OCI-LY7 (cell line): ENCODE measurements at regions of chr16 and their contacts with region 1.

Region 1: DNA sequence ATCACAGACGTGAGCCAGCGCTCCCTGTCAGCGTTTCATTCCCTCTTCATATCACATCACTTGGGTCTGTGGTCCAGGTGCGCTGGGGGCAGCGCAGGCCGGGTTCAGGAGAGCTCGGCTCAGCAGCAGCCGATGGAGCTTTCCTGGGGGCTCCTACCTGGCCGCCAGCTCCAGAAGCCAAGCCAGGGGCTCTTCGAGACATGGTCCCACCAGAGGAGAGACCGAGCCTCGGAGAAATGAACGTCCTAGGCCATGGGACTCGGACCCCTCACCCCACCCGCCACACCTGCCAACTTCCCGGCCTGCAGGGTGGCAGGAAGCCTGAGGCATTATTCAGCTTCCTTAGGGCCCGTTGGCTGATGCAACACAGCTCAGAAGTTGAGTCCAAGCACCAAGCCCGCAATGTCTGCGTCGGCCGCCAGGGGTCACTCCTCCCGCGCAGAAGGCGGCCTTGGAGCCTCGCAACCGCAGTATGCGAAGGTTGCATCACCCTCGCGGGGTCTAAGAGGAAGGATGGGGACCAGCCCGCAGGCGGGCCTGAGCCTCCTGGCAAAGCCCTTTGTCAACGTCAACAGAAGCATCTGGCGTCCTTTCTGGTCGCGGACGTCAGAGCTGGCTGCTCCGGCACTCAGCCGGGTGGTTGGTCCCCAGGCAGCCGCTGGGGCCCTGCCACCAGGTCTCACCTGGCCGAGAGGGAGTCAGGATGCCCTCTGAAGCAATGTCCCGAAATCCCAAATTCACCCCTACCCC is 13.2 kb upstream of the KLHDC4 start:
- DNase-seq: peak; percentile 100
- H3K4me3 ChIP-seq: peak overlapping the region; percentile 71
- H3K27ac ChIP-seq: peak overlapping the region; percentile 98
- H3K4me1 ChIP-seq: peaks cover 88% of the 10 kb centered on the region
- CTCF ChIP-seq: peak; percentile 81

Region 2: GRCh38 chr16:87387942-87388817 is 390.8 kb before region 1 on chr16:
- CTCF ChIA-PET with region 1: no interaction called
- POLR2A ChIA-PET with region 1: no interaction called
- intact Hi-C with region 1: loop called (anchors 10 kb)
- DNase-seq: peak; percentile 97
- H3K4me3 ChIP-seq: peak overlapping the region; percentile 51
- H3K27ac ChIP-seq: peak overlapping the region; percentile 85
- H3K4me1 ChIP-seq: peaks cover 44% of the 10 kb centered on the region
- CTCF ChIP-seq: no peak

Region 3: DNA sequence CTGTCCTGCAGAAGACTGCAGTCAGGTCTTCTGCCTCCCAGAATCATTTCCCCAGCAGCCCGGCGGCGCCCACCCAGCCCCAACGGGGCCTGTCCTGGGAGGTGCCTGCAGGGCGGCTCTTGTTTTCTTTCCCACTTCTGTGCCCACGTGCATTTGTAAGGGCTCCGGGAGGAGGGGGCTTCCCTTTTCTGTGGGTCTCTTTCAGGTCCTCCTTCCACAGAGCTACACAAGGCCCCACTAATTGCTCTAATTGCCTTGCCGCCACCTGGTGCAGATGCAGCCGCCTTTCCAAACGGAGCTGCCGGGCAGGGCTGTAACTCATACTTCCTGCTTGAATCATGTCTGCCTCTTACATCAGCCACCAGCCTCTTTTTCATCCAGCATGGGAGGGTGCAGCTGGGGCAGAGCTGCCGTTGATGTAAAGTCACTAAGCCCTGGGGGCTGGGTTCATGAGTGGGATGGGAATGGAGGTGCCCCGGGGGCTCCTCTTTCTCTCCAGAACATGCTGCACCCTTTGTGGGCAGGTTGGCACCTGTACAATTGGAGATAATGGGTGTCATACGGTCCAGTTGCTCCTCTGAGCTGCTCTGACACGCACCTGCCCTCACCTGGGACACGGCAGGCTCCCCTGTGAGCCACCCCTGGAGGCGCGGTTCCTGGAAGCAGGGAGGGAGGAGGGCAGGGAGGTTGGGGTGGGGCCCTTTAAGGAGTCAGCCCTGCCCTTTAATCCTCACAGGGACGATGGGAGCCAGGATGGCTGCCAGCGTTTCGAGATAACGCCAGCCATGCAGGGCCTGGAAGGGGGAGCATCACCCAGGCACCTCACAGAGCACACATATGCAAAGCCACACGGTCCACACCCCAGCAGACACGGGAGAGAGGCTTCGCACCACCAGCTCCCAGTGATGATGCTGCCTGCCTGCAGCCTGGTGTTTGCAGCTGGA is 27.9 kb after region 1 on chr16:
- CTCF ChIA-PET with region 1: interaction called, 19 read pairs
- POLR2A ChIA-PET with region 1: interaction called, 128 read pairs
- intact Hi-C with region 1: loop called (anchors 1 kb)
- DNase-seq: peak; percentile 95
- H3K4me3 ChIP-seq: peak overlapping the region; percentile 65
- H3K27ac ChIP-seq: peak overlapping the region; percentile 97
- H3K4me1 ChIP-seq: peaks cover 91% of the 10 kb centered on the region
- CTCF ChIP-seq: 0 out of 2 replicates have a peak, but pooled peaks have one; percentile 24

Region 4: DNA sequence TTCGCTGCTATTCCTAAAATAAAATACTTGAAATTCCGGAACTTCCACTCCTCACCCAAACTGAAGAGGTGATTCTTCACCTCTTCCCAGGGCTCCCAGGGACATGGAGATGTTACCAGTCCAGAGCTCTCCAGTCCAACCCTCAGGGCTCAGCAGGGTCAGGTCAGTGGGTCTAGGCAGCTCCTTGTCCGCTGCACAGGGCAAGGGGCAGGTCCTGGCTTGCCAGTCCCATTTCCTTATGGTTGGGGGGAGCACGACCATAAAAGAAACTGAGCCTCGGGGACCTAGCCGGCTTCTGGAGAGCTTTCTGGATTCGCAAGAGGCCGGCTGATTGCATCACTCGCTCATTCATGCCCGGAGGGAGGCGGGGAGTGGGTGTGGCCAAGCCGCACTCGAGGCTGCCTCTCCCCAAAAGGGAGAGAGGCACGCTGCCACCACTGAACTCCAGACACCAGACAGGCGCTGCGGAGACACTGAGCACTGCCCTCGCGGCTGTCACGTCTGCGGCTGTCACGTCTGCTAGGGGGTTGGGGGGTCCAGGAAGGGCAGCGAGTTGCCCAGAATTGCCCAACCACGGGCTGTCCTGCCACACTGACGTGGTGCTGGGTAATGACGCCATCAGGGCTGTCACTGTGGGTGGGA is 74.5 kb after region 1 on chr16:
- CTCF ChIA-PET with region 1: interaction called, 18 read pairs
- POLR2A ChIA-PET with region 1: interaction called, 34 read pairs
- intact Hi-C with region 1: loop called (anchors 1 kb)
- DNase-seq: peak; percentile 95
- H3K4me3 ChIP-seq: peak overlapping the region; percentile 53
- H3K27ac ChIP-seq: peak overlapping the region; percentile 85
- H3K4me1 ChIP-seq: peaks cover 91% of the 10 kb centered on the region
- CTCF ChIP-seq: no peak

Region 5: GRCh38 chr16:87877938-87878507 is 99.0 kb after region 1 on chr16:
- CTCF ChIA-PET with region 1: interaction called, 41 read pairs
- POLR2A ChIA-PET with region 1: interaction called, 51 read pairs
- intact Hi-C with region 1: no loop called
- DNase-seq: peak; percentile 73
- H3K4me3 ChIP-seq: no peak overlapping the region
- H3K27ac ChIP-seq: no peak overlapping the region
- H3K4me1 ChIP-seq: peaks cover 11% of the 10 kb centered on the region
- CTCF ChIP-seq: peak; percentile 73

Region 6: GRCh38 chr16:87930456-87930855 is 151.5 kb after region 1 on chr16:
- CTCF ChIA-PET with region 1: no interaction called
- POLR2A ChIA-PET with region 1: no interaction called
- intact Hi-C with region 1: no loop called
- DNase-seq: peak; percentile 41
- H3K4me3 ChIP-seq: no peak overlapping the region
- H3K27ac ChIP-seq: no peak overlapping the region
- H3K4me1 ChIP-seq: peaks cover 5% of the 10 kb centered on the region
- CTCF ChIP-seq: peak; percentile 66

Region 7: GRCh38 chr16:88045820-88046303 is 266.9 kb after region 1 on chr16:
- CTCF ChIA-PET with region 1: no interaction called
- POLR2A ChIA-PET with region 1: no interaction called
- intact Hi-C with region 1: loop called (anchors 10 kb)
- DNase-seq: peak; percentile 92
- H3K4me3 ChIP-seq: peak overlapping the region; percentile 28
- H3K27ac ChIP-seq: peak overlapping the region; percentile 69
- H3K4me1 ChIP-seq: peaks cover 38% of the 10 kb centered on the region
- CTCF ChIP-seq: no peak